CD4-positive, alpha-beta memory T cell (primary cell): ENCODE measurements at regions of chr17 and their contacts with region 1.

Region 1: GRCh38 chr17:74790161-74791054 is 14.3 kb upstream of the NAT9 start:
- DNase-seq: no peak
- H3K4me3 ChIP-seq: no peak overlapping the region
- H3K4me3 Mint-ChIP-seq: peak overlapping the region in 6 of 8 donors; percentile 51 to 70 (median 58)
- H3K27ac ChIP-seq: no peak overlapping the region
- H3K27ac Mint-ChIP-seq: peak overlapping the region in 4 of 7 donors; percentile 42 to 82 (median 68)
- H3K4me1 ChIP-seq: peaks cover 19% of the 10 kb centered on the region
- H3K4me1 Mint-ChIP-seq: peaks cover 17 to 41% (median 29%) of the 10 kb centered on the region in 4 donors
- H3K27me3 ChIP-seq: no peaks in the 10 kb centered on the region
- H3K27me3 Mint-ChIP-seq: no peaks in the 10 kb centered on the region

Region 2: GRCh38 chr17:74748529-74749365 is 41.7 kb before region 1 on chr17 and contains the start of gene NHERF1:
- CTCF ChIA-PET with region 1: interaction called, 72 read pairs
- POLR2A ChIA-PET with region 1: interaction called, 12 read pairs
- intact Hi-C with region 1: loop called (anchors 1 kb)
- DNase-seq: peak; percentile 61 to 96 (median 94)
- H3K4me3 ChIP-seq: peak within 1 kb of the TSS; percentile 64 to 92
- H3K4me3 Mint-ChIP-seq: peak within 1 kb of the TSS; percentile 90 to 99 (median 98)
- H3K27ac ChIP-seq: peak within 1 kb of the TSS; percentile 80
- H3K27ac Mint-ChIP-seq: peak within 1 kb of the TSS; percentile 88 to 98 (median 94)
- H3K4me1 ChIP-seq: peaks cover 73% of the 10 kb centered on the region
- H3K4me1 Mint-ChIP-seq: peaks cover 43 to 81% (median 60%) of the 10 kb centered on the region in 4 donors
- H3K27me3 ChIP-seq: no peaks in the 10 kb centered on the region
- H3K27me3 Mint-ChIP-seq: no peaks in the 10 kb centered on the region
- total RNA-seq, gene NHERF1: 202 to 209 TPM

Region 3: GRCh38 chr17:74770498-74771318 is 19.7 kb before region 1 on chr17:
- CTCF ChIA-PET with region 1: interaction called, 109 read pairs
- POLR2A ChIA-PET with region 1: interaction called, 8 read pairs
- intact Hi-C with region 1: no loop called
- DNase-seq: peak; percentile 79
- H3K4me3 ChIP-seq: no peak overlapping the region
- H3K4me3 Mint-ChIP-seq: peak overlapping the region in 3 of 8 donors; percentile 20 to 46 (median 24)
- H3K27ac ChIP-seq: peak overlapping the region; percentile 46
- H3K27ac Mint-ChIP-seq: peak overlapping the region; percentile 64 to 92 (median 89)
- H3K4me1 ChIP-seq: peaks cover 31% of the 10 kb centered on the region
- H3K4me1 Mint-ChIP-seq: peaks cover 21 to 67% (median 39%) of the 10 kb centered on the region in 4 donors
- H3K27me3 ChIP-seq: no peaks in the 10 kb centered on the region
- H3K27me3 Mint-ChIP-seq: no peaks in the 10 kb centered on the region

Region 4: DNA sequence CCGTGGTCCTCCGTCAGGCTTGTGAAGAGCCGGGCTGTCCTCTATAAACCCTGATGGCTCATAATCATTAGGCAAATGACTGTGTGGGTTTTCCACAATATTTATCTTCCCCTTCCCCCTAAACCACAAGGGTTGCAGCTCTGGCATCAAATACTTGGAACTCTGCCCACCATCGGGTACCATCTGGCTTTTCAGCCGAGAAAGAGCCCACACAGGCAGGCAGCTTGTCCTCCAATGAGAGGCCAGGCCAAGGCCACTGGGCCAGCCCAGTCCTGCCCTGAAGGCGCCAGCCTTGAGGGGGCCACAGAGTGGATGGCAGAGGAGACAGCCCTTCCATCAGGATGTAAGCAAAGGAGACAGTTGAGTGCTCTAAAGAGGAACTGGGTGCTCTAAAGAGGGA is 17.5 kb after region 1 on chr17:
- CTCF ChIA-PET with region 1: interaction called, 27 read pairs
- POLR2A ChIA-PET with region 1: no interaction called
- intact Hi-C with region 1: no loop called
- DNase-seq: no peak
- H3K4me3 ChIP-seq: no peak overlapping the region
- H3K4me3 Mint-ChIP-seq: no peak overlapping the region
- H3K27ac ChIP-seq: no peak overlapping the region
- H3K27ac Mint-ChIP-seq: peak overlapping the region in 2 of 7 donors; percentile 8 to 59
- H3K4me1 ChIP-seq: no peaks in the 10 kb centered on the region
- H3K4me1 Mint-ChIP-seq: peaks cover 0 to 4% (median under 1%) of the 10 kb centered on the region in 4 donors
- H3K27me3 ChIP-seq: no peaks in the 10 kb centered on the region
- H3K27me3 Mint-ChIP-seq: no peaks in the 10 kb centered on the region

Region 5: GRCh38 chr17:74864866-74865395 is 74.5 kb after region 1 on chr17:
- CTCF ChIA-PET with region 1: interaction called, 127 read pairs
- POLR2A ChIA-PET with region 1: interaction called, 3 read pairs
- intact Hi-C with region 1: loop called (anchors 1 kb)
- DNase-seq: peak; percentile 52 to 68 (median 62)
- H3K4me3 ChIP-seq: no peak overlapping the region
- H3K4me3 Mint-ChIP-seq: peak overlapping the region in 1 of 8 donors; percentile 65
- H3K27ac ChIP-seq: no peak overlapping the region
- H3K27ac Mint-ChIP-seq: peak overlapping the region in 2 of 7 donors; percentile 6 to 68
- H3K4me1 ChIP-seq: peaks cover 23% of the 10 kb centered on the region
- H3K4me1 Mint-ChIP-seq: peaks cover 12 to 20% (median 15%) of the 10 kb centered on the region in 4 donors
- H3K27me3 ChIP-seq: peaks cover 11% of the 10 kb centered on the region
- H3K27me3 Mint-ChIP-seq: peaks cover 1 to 7% of the 10 kb centered on the region in 2 donors